ENCODE measurements at regions of chr6 and their contacts with region 1.

Region 1: DNA sequence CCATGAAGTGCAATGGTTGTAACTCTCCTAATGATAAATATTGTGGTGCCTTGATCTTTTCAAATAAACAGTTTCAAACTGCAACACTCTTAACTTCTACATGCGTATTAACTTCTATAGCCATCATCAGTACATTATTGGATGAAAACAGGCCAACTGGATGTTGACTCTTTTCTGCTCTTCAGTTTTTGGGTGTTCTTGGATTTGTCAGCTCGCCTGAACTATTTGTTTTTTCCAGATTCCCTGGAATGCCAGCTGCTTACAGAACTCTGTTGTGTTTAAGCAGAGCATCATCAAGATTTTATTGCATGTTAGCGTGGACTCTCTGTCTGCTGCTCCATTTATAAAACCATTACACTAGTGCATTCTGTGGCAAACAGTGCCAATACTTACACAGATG is 626.1 kb downstream of the HDGFL1 start:
- DNase-seq: no peak
- H3K4me3 ChIP-seq: no peak overlapping the region
- H3K4me3 Mint-ChIP-seq: no peak overlapping the region
- H3K27ac Mint-ChIP-seq: no peak overlapping the region
- H3K4me1 ChIP-seq: no peaks in the 10 kb centered on the region
- H3K4me1 Mint-ChIP-seq: no peaks in the 10 kb centered on the region
- H3K27me3 ChIP-seq: no peaks in the 10 kb centered on the region
- H3K27me3 Mint-ChIP-seq: no peaks in the 10 kb centered on the region
- CTCF ChIP-seq: no peak

Region 2: GRCh38 chr6:23269436-23269835 is 73.9 kb after region 1 on chr6:
- CTCF ChIA-PET with region 1: no interaction called
- POLR2A ChIA-PET with region 1: no interaction called
- intact Hi-C with region 1: no loop called
- DNase-seq: no peak
- H3K4me3 ChIP-seq: no peak overlapping the region
- H3K4me3 Mint-ChIP-seq: no peak overlapping the region
- H3K27ac Mint-ChIP-seq: no peak overlapping the region
- H3K4me1 ChIP-seq: no peaks in the 10 kb centered on the region
- H3K4me1 Mint-ChIP-seq: peaks cover 10% of the 10 kb centered on the region
- H3K27me3 ChIP-seq: no peaks in the 10 kb centered on the region
- H3K27me3 Mint-ChIP-seq: no peaks in the 10 kb centered on the region
- CTCF ChIP-seq: no peak

Region 3: GRCh38 chr6:23505026-23505425 is 309.5 kb after region 1 on chr6:
- CTCF ChIA-PET with region 1: interaction called, 12 read pairs
- POLR2A ChIA-PET with region 1: no interaction called
- intact Hi-C with region 1: no loop called
- DNase-seq: no peak
- H3K4me3 ChIP-seq: no peak overlapping the region
- H3K4me3 Mint-ChIP-seq: no peak overlapping the region
- H3K27ac Mint-ChIP-seq: no peak overlapping the region
- H3K4me1 ChIP-seq: no peaks in the 10 kb centered on the region
- H3K4me1 Mint-ChIP-seq: no peaks in the 10 kb centered on the region
- H3K27me3 ChIP-seq: no peaks in the 10 kb centered on the region
- H3K27me3 Mint-ChIP-seq: no peaks in the 10 kb centered on the region
- CTCF ChIP-seq: no peak

Region 4: DNA sequence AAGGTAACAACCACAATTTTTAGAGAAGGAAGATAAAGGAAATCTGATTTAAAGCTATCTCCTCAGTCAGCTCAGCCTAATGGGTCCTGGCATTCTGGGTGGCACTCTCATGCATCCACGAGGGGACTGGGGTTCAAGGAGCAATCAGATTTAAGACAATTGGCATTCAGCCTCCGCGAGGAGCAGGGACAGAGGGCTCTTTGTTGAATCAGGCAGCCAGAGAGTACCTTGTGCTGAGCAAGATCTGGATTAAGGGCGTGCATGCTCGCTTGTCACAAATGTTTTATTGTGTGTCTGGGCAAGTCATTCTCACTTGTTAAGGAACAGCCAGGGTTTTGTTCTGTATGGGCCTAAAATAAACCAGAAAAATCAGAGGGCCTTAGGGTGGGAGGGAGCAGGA is 455.2 kb after region 1 on chr6:
- CTCF ChIA-PET with region 1: no interaction called
- POLR2A ChIA-PET with region 1: no interaction called
- intact Hi-C with region 1: no loop called
- DNase-seq: no peak
- H3K4me3 ChIP-seq: no peak overlapping the region
- H3K4me3 Mint-ChIP-seq: no peak overlapping the region
- H3K27ac Mint-ChIP-seq: no peak overlapping the region
- H3K4me1 ChIP-seq: no peaks in the 10 kb centered on the region
- H3K4me1 Mint-ChIP-seq: no peaks in the 10 kb centered on the region
- H3K27me3 ChIP-seq: no peaks in the 10 kb centered on the region
- H3K27me3 Mint-ChIP-seq: no peaks in the 10 kb centered on the region
- CTCF ChIP-seq: no peak